WTC11 (cell line): ENCODE measurements at regions of chr10 and their contacts with region 1.

Region 1: DNA sequence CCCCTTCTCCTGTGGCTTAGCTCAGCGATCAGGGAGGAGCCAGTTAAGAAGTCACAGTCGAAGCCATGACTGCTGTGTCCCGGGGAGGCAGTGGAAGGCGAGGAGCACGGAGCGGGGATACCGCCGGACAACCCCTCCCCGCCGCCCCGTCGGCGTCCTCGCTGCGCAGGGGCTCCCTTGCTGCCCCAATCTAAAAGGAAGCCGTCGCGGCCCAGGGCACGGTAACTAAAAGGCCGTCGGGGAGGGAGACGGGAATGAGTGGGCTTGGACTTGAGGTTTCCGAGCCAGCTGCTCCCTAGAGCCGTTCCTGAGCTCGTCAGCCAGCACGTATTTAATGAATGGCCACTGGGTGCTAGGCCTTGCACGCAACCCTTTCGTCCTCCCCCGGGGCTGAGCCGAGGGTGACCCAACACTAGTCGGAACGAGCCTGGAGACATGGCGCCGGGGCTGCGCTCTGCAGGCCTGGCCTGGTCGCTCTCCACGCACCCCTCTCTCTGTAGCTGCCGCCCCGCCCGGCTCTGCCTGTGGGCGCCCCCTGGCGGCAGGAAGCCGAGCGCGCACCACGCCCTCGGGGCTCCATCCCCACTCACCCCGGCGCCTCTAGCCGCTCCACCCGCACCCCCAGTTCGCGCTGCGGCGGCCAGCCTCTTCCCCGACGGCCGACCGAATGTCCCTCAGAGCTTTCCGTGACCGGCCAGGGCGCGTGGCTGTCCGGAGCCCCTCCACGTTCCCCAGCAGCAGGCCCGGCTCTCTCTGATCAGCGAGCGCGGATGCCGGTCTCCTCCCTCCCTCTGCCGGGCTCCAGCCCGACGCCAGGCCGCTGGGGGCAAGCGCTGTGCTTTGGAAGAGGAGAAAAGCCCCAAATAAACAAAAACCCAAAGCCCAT is 29.3 kb upstream of the KCNK18 start:
- DNase-seq: peak; percentile 84
- ATAC-seq: peak; percentile 62
- H3K4me3 Mint-ChIP-seq: peak overlapping the region; percentile 68
- H3K27ac Mint-ChIP-seq: no peak overlapping the region
- H3K4me1 Mint-ChIP-seq: peaks cover 35% of the 10 kb centered on the region
- H3K27me3 Mint-ChIP-seq: peaks cover 100% of the 10 kb centered on the region
- CTCF ChIP-seq: peak; percentile 99

Region 2: DNA sequence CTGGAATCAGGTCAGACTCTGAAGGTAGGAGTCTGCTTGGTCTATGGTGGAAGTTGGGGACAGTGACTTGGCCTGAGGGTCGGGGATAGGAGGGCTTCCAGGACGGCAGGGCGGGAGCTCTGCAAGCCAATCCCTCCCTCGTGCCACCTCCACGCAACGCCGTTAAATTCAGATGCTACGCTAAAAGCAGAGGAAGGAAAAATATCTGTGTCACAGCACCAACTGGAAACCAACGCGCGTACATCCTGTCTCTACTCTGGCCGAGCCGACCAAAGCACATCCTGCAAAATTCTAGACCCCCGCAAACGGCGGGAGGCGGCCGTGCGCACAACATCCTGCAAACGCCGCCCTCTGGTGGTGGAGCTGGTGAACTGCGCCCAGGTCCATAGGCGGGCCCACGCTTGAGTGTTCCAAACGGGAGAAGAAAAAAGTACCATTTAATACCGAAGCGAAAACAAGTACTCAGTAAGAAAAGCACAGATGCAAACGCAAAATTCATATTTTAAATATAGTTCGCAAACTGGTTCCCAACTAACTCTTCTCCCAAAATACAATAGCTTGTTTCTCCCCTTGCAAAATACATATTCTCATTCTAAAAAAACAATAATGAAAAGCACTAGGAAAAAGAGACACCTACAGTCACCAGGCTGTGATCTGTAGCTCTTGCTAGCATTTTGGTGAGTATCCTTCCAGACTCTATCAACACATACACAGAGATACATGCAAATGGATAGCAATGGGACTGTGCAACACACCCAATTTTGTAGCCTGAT is 380.0 kb before region 1 on chr10:
- CTCF ChIA-PET with region 1: interaction called, 21 read pairs
- POLR2A ChIA-PET with region 1: no interaction called
- DNase-seq: peak; percentile 90
- ATAC-seq: peak; percentile 91
- H3K4me3 Mint-ChIP-seq: peak overlapping the region; percentile 55
- H3K27ac Mint-ChIP-seq: no peak overlapping the region
- H3K4me1 Mint-ChIP-seq: peaks cover 10% of the 10 kb centered on the region; the same call in 1 of the 2 replicates
- H3K27me3 Mint-ChIP-seq: 0 out of 2 replicates have a peak, but pooled peaks cover 6% of the 10 kb centered on the region
- CTCF ChIP-seq: peak; percentile 99

Region 3: GRCh38 chr10:116836902-116837523 is 331.0 kb before region 1 on chr10:
- CTCF ChIA-PET with region 1: interaction called, 10 read pairs
- POLR2A ChIA-PET with region 1: no interaction called
- DNase-seq: no peak
- ATAC-seq: no peak
- H3K4me3 Mint-ChIP-seq: no peak overlapping the region
- H3K27ac Mint-ChIP-seq: peak overlapping the region; percentile 52; the same call in 1 of the 2 replicates
- H3K4me1 Mint-ChIP-seq: peaks cover 76% of the 10 kb centered on the region
- H3K27me3 Mint-ChIP-seq: peaks cover 4% of the 10 kb centered on the region; the same call in 1 of the 2 replicates
- CTCF ChIP-seq: no peak

Region 4: DNA sequence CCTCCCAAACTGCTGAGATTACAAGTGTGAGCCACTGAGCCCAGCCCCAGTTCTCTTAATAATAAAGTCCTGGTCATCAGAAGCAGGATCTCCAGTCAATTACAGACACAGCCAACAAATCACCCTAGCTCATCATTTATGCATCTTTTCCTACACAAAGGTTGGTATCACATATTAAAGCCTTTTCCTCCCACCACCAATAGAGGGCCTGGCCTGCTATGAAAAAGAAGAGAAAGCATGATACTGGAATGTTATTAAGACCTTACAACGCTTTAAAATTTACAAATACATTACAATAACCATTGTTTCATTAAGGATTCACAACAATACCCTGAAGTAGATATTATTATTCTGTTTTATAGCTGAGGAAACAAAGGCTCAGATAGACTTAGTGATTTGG is 55.8 kb before region 1 on chr10:
- CTCF ChIA-PET with region 1: interaction called, 24 read pairs
- POLR2A ChIA-PET with region 1: no interaction called
- DNase-seq: no peak
- ATAC-seq: no peak; the same call in 1 of the 2 replicates
- H3K4me3 Mint-ChIP-seq: no peak overlapping the region
- H3K27ac Mint-ChIP-seq: no peak overlapping the region
- H3K4me1 Mint-ChIP-seq: no peaks in the 10 kb centered on the region
- H3K27me3 Mint-ChIP-seq: peaks cover 16% of the 10 kb centered on the region
- CTCF ChIP-seq: no peak

Region 5: GRCh38 chr10:117137031-117137910 is 30.8 kb before region 1 on chr10:
- CTCF ChIA-PET with region 1: interaction called, 72 read pairs
- POLR2A ChIA-PET with region 1: interaction called, 4 read pairs
- DNase-seq: peak; percentile 60
- ATAC-seq: peak; percentile 5
- H3K4me3 Mint-ChIP-seq: peak overlapping the region; percentile 67
- H3K27ac Mint-ChIP-seq: no peak overlapping the region
- H3K4me1 Mint-ChIP-seq: peaks cover 54% of the 10 kb centered on the region
- H3K27me3 Mint-ChIP-seq: peaks cover 96% of the 10 kb centered on the region
- CTCF ChIP-seq: no peak

Region 6: DNA sequence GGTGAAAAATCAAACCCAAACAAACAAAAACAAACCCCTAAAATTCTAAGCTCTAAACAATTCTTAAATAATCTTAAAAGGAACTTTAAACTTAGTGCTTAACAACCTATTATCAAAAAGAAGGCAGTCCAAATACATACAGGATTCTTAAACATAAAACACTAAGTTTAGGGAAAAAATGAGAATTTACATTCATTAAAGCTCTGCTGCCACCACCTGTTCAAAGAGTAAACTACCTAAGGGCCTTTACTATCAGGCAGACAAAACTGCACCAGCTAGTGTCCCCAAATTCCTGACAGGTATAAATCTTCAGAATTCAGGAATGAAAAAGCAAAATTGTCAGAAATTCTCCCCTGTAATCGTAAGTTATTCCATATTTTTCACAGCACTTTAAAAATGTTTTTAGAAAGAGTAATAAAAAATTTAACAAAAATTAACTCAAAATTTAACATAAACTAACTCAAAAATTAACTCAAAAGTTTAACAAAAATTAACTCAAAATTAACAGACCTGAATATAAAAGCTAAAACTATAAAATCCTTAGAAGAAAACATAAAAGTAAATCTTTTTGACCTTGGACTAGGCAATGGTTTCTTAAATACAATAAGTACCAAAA is 152.1 kb after region 1 on chr10:
- CTCF ChIA-PET with region 1: no interaction called
- POLR2A ChIA-PET with region 1: no interaction called
- DNase-seq: no peak
- ATAC-seq: peak; percentile 69
- H3K4me3 Mint-ChIP-seq: no peak overlapping the region
- H3K27ac Mint-ChIP-seq: no peak overlapping the region
- H3K4me1 Mint-ChIP-seq: peaks cover 34% of the 10 kb centered on the region
- H3K27me3 Mint-ChIP-seq: no peaks in the 10 kb centered on the region
- CTCF ChIP-seq: 0 out of 2 replicates have a peak, but pooled peaks have one; percentile 29